ENCODE measurements at regions of chr12 and their contacts with region 1.

Region 1: GRCh38 chr12:33551006-33551405 is 111.4 kb upstream of the SYT10 start:
- DNase-seq: no peak
- ATAC-seq: no peak
- H3K4me3 ChIP-seq: no peak overlapping the region
- H3K27ac ChIP-seq: no peak overlapping the region
- H3K4me1 ChIP-seq: no peaks in the 10 kb centered on the region
- H3K27me3 ChIP-seq: no peaks in the 10 kb centered on the region
- CTCF ChIP-seq: no peak
- EP300 ChIP-seq: no peak
- POLR2A ChIP-seq: no peak
- RAD21 ChIP-seq: no peak

Region 2: DNA sequence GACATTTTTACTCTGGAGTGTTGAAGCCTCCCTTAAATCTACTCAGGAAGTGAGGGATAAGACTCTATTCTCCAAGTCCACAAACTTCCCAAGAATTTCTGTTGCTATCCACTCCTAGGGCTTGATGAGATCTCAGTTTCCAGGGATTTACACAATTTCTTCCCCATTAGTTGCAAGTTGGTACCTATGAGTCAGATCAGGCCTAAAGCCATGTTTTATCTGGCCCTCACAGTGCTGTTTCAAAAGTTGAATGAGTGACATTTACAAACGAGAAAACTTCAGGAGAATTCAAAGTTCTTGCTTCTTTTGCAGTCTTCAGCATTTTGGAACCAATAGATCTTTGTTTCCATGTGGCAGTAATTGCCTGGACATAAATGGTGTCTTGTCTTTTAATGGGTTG is 45.1 kb after region 1 on chr12:
- CTCF ChIA-PET with region 1: no interaction called
- POLR2A ChIA-PET with region 1: no interaction called
- in situ Hi-C with region 1: no loop called
- intact Hi-C with region 1: no loop called
- DNase-seq: no peak
- ATAC-seq: no peak
- H3K4me3 ChIP-seq: no peak overlapping the region
- H3K27ac ChIP-seq: no peak overlapping the region
- H3K4me1 ChIP-seq: no peaks in the 10 kb centered on the region
- H3K27me3 ChIP-seq: no peaks in the 10 kb centered on the region
- CTCF ChIP-seq: no peak
- EP300 ChIP-seq: no peak
- POLR2A ChIP-seq: no peak
- RAD21 ChIP-seq: no peak

Region 3: DNA sequence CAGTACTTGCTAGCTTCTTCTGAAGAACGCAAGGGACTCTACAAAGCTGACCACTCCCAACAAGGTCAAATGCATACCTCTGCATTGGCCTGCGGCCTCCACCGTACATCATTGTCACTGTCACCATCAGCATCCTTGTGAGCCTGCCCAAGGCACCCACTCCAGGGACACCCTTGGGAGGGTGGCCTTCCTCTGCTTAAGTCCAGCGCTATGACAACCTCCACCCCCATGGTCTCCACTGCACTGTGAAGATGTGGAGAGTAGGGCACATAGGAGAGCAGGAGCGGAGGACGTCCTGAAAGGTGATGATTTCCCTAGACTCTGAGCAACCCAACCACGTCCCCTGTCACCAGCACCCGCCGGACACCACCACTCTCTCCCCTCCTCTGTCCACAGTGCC is 724.1 kb after region 1 on chr12:
- CTCF ChIA-PET with region 1: no interaction called
- POLR2A ChIA-PET with region 1: no interaction called
- in situ Hi-C with region 1: no loop called
- intact Hi-C with region 1: loop called (anchors 10 kb)
- DNase-seq: no peak
- ATAC-seq: no peak
- H3K4me3 ChIP-seq: no peak overlapping the region
- H3K27ac ChIP-seq: no peak overlapping the region
- H3K4me1 ChIP-seq: no peaks in the 10 kb centered on the region
- H3K27me3 ChIP-seq: no peaks in the 10 kb centered on the region; a peak in 1 of 5 replicates
- CTCF ChIP-seq: no peak
- EP300 ChIP-seq: no peak
- POLR2A ChIP-seq: no peak
- RAD21 ChIP-seq: no peak

Measured in HepG2 (cell line).